Cardiac septum (tissue), 1 donor: ENCODE measurements at regions of chr1 and their contacts with region 1.

Region 1: DNA sequence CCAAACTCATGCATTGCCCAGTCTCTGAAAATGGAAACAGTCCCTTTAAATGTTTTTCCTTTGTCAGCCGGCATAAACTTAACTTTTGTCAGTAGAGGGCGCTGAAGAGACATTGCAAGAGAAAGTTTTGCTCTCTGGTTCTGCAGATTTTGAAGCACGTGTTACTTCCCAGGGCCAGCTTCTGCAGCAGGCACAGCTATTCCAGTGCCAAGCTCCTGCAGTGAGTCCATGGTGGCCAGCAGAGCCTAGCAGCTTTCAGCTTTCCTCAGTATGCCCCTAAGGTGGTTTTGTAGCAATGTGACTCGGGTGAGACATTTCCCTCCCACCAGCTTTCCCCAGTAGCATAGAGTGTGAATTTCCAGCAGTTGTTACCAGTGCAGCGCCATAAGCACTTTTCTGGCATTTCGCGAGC is 2.6 kb upstream of the IFI44L start:
- DNase-seq: no peak

Region 2: DNA sequence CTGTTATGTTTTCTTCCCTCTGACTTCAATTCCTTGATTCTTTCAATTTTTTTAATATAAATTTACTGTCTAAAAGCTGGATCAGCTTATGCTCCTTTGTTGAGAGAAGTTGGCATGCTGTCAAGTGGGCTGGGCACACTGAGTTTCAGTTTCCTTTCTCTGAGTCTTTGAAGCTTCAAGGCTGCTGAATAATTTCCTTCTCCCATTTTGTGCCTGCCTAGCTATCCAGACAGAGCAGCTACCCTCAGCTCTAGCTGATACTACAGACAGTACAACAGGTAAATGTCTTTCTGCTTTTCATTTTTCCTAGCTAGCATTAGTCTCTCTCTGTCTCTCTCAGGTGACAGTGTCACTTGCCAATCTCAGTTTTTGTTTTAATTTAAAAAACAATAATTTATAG is 32.0 kb after region 1 on chr1 and contains the start of gene IFI44:
- intact Hi-C with region 1: loop called (anchors 1 kb)
- DNase-seq: peak; percentile 82
- total RNA-seq, gene IFI44: 8.2 TPM

Region 3: GRCh38 chr1:78676347-78676982 is 58.8 kb after region 1 on chr1:
- intact Hi-C with region 1: loop called (anchors 1 kb)
- DNase-seq: no peak

Region 4: GRCh38 chr1:78765489-78765888 is 147.9 kb after region 1 on chr1:
- intact Hi-C with region 1: no loop called
- DNase-seq: no peak

Region 5: DNA sequence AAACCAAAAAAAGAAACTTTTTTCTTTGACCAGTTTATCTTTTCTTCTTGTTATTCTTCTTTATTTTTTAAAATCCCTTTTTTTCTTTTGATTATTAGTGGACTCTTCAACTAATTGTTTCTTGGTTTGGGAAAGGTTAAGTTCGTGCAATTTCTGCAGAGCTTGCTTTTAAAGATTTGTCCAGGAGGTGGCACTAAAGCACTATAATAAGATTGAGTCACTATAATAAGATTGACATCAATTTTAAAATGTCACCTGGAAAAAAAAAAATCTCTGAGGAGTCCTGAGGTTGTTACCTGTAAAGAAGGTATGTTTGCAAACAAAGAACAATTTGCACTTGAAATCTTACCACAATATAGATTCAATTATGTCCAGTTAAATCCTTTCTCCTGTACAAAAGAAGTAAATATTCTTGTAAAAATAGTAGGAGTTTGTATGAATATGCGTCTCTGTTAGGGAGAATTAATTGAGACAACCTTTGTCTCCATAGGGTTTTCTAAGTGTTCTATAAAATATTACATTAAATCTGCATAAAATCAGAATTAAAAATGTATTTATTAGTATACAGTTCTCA is 222.2 kb after region 1 on chr1:
- intact Hi-C with region 1: loop called (anchors 5 kb)
- DNase-seq: no peak